ENCODE measurements at regions of chr10 and their contacts with region 1.

Region 1: DNA sequence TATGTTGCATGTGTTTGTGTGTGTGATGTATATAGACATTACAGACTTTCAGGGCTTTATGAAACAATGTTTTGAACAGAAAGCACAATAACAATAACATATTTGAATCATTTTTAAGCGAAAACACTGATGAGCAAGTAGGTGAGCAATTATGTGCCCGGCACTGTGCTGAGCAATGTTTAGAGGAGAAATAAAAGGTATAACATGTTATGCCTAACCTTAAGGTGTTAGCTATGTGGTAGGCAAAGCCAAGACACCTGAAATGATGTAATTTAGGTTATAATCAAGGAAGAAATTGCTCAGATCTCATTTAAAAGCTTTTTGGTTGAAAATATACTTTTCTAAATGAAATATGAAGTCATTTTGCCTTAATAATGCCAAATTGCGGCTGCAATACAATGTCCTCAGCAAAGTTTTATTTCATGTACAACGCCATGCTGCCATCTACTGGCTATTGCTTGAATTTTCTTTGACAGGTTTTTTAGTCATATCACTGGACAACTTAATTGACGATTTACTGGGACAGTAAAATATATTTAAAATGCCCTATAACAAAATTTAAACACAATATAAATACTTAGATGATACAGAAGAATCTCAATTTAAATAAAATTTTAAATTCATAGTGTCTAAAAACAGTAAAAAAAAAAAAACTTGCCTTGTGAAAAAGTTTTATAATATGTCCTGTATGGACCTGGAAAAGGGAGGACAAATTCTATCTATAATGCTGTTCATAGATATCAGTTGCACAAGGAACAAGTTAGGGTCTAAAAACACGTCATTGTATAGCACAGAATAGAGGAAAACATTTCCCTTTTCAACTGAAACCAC is 131.1 kb upstream of the CDK1 start:
- DNase-seq: peak; percentile 54 to 85 (median 77)
- H3K4me3 ChIP-seq: no peak overlapping the region
- H3K27ac ChIP-seq: no peak overlapping the region
- H3K4me1 ChIP-seq: peaks cover 0 to 2% (median 0%) of the 10 kb centered on the region in 4 experiments
- H3K27me3 ChIP-seq: no peaks in the 10 kb centered on the region

Region 2: DNA sequence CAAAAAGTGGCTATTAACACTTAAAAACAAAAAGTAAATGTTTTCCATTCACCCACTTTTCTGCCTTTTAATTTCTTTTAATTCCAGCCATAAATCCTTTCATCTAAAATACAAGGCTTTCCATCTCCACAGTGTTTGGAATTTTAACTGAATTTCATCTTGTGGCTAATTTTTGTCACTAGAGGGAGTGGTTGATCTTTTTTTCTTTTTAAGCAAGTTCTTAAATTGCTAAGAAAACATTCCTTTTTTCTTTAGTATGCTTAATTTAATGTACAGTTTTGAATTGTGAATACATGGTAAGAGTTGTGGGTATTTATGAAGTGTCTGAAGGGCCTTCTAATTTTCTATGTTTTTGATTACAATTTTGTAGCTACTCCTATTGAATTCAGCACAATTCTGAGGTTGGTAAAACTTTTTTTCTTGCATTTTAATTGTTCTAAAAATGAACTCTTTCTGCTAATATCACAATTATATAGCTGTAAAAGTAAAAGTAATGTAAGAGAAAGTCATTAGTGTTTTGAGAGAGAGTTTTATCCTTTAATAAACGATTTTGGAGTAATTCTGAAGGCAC is 202.6 kb before region 1 on chr10:
- CTCF ChIA-PET with region 1: interaction called, 145 read pairs
- POLR2A ChIA-PET with region 1: no interaction called
- DNase-seq: peak; percentile 31 to 53 (median 43)
- H3K4me3 ChIP-seq: no peak overlapping the region
- H3K27ac ChIP-seq: no peak overlapping the region
- H3K4me1 ChIP-seq: peaks cover 0 to 9% (median 5%) of the 10 kb centered on the region in 4 experiments
- H3K27me3 ChIP-seq: no peaks in the 10 kb centered on the region

Region 3: DNA sequence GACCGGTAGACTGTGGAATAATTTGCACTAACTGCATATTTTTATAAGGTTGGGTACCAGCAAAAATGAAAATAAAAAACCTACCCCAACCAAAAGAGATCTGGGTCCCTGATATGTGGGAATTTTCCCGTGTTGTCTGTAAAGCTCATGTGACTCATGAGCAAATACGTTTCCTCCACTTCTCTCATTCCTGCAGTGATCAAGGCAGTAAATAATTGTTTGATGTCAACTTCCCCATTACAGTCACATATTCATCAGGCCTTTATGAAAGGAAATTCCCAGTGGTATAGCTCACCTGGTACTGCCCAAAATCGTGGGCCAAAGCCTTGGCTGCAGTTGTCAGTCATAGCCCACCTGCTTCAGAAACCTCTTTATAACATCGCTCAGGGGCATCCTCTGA is 91.5 kb before region 1 on chr10:
- CTCF ChIA-PET with region 1: interaction called, 11 read pairs
- POLR2A ChIA-PET with region 1: no interaction called
- DNase-seq: peak; percentile 11 to 55 (median 41)
- H3K4me3 ChIP-seq: no peak overlapping the region
- H3K27ac ChIP-seq: no peak overlapping the region
- H3K4me1 ChIP-seq: peaks cover 0 to 12% (median 5%) of the 10 kb centered on the region in 4 experiments
- H3K27me3 ChIP-seq: no peaks in the 10 kb centered on the region

Region 4: GRCh38 chr10:60739581-60739980 is 92.4 kb after region 1 on chr10:
- CTCF ChIA-PET with region 1: no interaction called
- POLR2A ChIA-PET with region 1: no interaction called
- DNase-seq: no peak
- H3K4me3 ChIP-seq: no peak overlapping the region
- H3K27ac ChIP-seq: no peak overlapping the region
- H3K4me1 ChIP-seq: no peaks in the 10 kb centered on the region
- H3K27me3 ChIP-seq: peaks cover 0 to 18% (median 4%) of the 10 kb centered on the region in 5 experiments

Region 5: GRCh38 chr10:60769406-60769805 is 122.2 kb after region 1 on chr10:
- CTCF ChIA-PET with region 1: interaction called, 12 read pairs
- POLR2A ChIA-PET with region 1: no interaction called
- DNase-seq: no peak
- H3K4me3 ChIP-seq: no peak overlapping the region
- H3K27ac ChIP-seq: no peak overlapping the region
- H3K4me1 ChIP-seq: no peaks in the 10 kb centered on the region
- H3K27me3 ChIP-seq: no peaks in the 10 kb centered on the region